ENCODE measurements at regions of chr5 and their contacts with region 1.

Region 1: DNA sequence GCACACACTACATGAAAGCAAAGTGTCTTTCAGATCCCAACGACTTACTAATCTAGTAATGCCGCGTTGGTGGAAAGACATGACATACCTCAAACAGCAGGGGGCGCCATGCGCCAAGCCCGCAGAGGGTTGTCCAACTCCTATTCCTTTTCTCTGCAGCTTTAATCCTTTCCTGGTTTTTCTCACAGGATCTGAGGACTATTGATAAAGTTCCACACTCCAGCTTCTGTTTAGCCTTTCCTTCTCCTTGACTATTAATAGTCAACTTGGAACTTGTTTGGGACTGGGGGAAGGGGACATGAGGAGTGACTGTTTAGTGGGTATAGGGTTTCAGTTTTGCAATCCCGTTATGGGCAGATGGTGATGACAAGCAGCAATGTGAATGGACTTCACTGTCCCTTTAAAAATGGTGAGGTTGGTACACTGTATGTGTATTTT is 62.9 kb downstream of the OTULIN start:
- DNase-seq: peak; percentile 81
- H3K4me3 ChIP-seq: no peak overlapping the region; a peak in 1 of 4 replicates
- H3K27ac ChIP-seq: no peak overlapping the region
- H3K4me1 ChIP-seq: 0 out of 4 replicates have a peak, but pooled peaks cover 0 to 7% of the 10 kb centered on the region in 2 experiments
- H3K27me3 ChIP-seq: no peaks in the 10 kb centered on the region
- CTCF ChIP-seq: peak; percentile 96
- EP300 ChIP-seq: no peak
- RAD21 ChIP-seq: peak; percentile 98

Region 2: GRCh38 chr5:14685757-14686156 is 41.7 kb before region 1 on chr5:
- CTCF ChIA-PET with region 1: interaction called, 31 read pairs
- POLR2A ChIA-PET with region 1: no interaction called
- DNase-seq: peak; percentile 69
- H3K4me3 ChIP-seq: no peak overlapping the region
- H3K27ac ChIP-seq: no peak overlapping the region; a peak in 1 of 4 replicates
- H3K4me1 ChIP-seq: peaks cover 0 to 11% of the 10 kb centered on the region in 2 experiments; a peak in 2 of 4 replicates
- H3K27me3 ChIP-seq: no peaks in the 10 kb centered on the region
- CTCF ChIP-seq: peak; percentile 73
- EP300 ChIP-seq: no peak
- RAD21 ChIP-seq: peak; percentile 85

Region 3: DNA sequence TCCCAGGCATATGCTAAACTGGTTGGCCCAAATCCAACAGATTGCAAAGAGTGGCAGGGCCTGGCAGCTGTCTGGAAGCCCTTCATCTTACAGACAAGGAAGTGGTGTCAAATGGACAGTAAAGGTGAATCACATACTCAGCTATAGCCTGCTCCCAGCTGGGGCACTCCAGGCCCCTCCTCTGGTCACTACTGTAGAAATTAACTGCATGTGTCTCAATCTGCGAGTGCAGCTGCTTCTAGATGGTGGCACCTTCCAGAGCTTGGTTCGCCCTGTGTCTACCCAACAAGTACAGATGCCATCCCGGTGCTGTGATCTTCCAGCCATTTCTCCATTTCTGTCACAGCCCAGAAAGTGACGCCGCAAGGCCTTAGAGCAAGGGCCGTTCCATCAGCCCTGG is 12.7 kb before region 1 on chr5:
- CTCF ChIA-PET with region 1: interaction called, 14 read pairs
- POLR2A ChIA-PET with region 1: no interaction called
- DNase-seq: no peak
- H3K4me3 ChIP-seq: no peak overlapping the region
- H3K27ac ChIP-seq: no peak overlapping the region; a peak in 1 of 4 replicates
- H3K4me1 ChIP-seq: peaks cover 0 to 8% of the 10 kb centered on the region in 2 experiments; a peak in 1 of 4 replicates
- H3K27me3 ChIP-seq: no peaks in the 10 kb centered on the region
- CTCF ChIP-seq: no peak
- EP300 ChIP-seq: no peak
- RAD21 ChIP-seq: no peak

Region 4: GRCh38 chr5:14806456-14806855 is 79.0 kb after region 1 on chr5:
- CTCF ChIA-PET with region 1: no interaction called
- POLR2A ChIA-PET with region 1: no interaction called
- DNase-seq: no peak
- H3K4me3 ChIP-seq: no peak overlapping the region
- H3K27ac ChIP-seq: no peak overlapping the region
- H3K4me1 ChIP-seq: peaks cover 0 to 20% of the 10 kb centered on the region in 2 experiments; a peak in 3 of 4 replicates
- H3K27me3 ChIP-seq: no peaks in the 10 kb centered on the region
- CTCF ChIP-seq: no peak
- EP300 ChIP-seq: no peak
- RAD21 ChIP-seq: no peak

Region 5: GRCh38 chr5:14849516-14850294 is 122.3 kb after region 1 on chr5:
- CTCF ChIA-PET with region 1: interaction called, 11 read pairs
- POLR2A ChIA-PET with region 1: no interaction called
- DNase-seq: no peak
- H3K4me3 ChIP-seq: no peak overlapping the region
- H3K27ac ChIP-seq: no peak overlapping the region
- H3K4me1 ChIP-seq: peaks cover 0 to 17% of the 10 kb centered on the region in 2 experiments; a peak in 1 of 4 replicates
- H3K27me3 ChIP-seq: no peaks in the 10 kb centered on the region
- CTCF ChIP-seq: no peak
- EP300 ChIP-seq: no peak
- RAD21 ChIP-seq: no peak

Region 6: GRCh38 chr5:14977058-14977685 is 249.7 kb after region 1 on chr5:
- CTCF ChIA-PET with region 1: interaction called, 10 read pairs
- POLR2A ChIA-PET with region 1: no interaction called
- DNase-seq: no peak
- H3K4me3 ChIP-seq: no peak overlapping the region
- H3K27ac ChIP-seq: no peak overlapping the region
- H3K4me1 ChIP-seq: no peaks in the 10 kb centered on the region
- H3K27me3 ChIP-seq: no peaks in the 10 kb centered on the region; the same call in 1 of the 2 replicates
- CTCF ChIP-seq: no peak
- EP300 ChIP-seq: no peak
- RAD21 ChIP-seq: no peak

Region 7: GRCh38 chr5:14996997-14997396 is 269.6 kb after region 1 on chr5:
- CTCF ChIA-PET with region 1: interaction called, 203 read pairs
- POLR2A ChIA-PET with region 1: no interaction called
- DNase-seq: no peak
- H3K4me3 ChIP-seq: no peak overlapping the region
- H3K27ac ChIP-seq: no peak overlapping the region
- H3K4me1 ChIP-seq: no peaks in the 10 kb centered on the region
- H3K27me3 ChIP-seq: no peaks in the 10 kb centered on the region
- CTCF ChIP-seq: no peak
- EP300 ChIP-seq: no peak
- RAD21 ChIP-seq: no peak

Region 8: GRCh38 chr5:15013654-15014463 is 286.4 kb after region 1 on chr5:
- CTCF ChIA-PET with region 1: interaction called, 50 read pairs
- POLR2A ChIA-PET with region 1: no interaction called
- DNase-seq: peak; percentile 62
- H3K4me3 ChIP-seq: no peak overlapping the region
- H3K27ac ChIP-seq: peak overlapping the region in 1 of 2 experiments; percentile 11; a peak in 1 of 4 replicates
- H3K4me1 ChIP-seq: peaks cover 1 to 13% of the 10 kb centered on the region in 2 experiments
- H3K27me3 ChIP-seq: no peaks in the 10 kb centered on the region
- CTCF ChIP-seq: peak; percentile 76
- EP300 ChIP-seq: no peak
- RAD21 ChIP-seq: peak; percentile 83

Measured in SK-N-SH (cell line).